A673 (cell line): ENCODE measurements at regions of chr1 and their contacts with region 1.

Region 1: GRCh38 chr1:197521118-197521739 is 253.2 kb downstream of the CRB1 start:
- DNase-seq: peak; percentile 68
- H3K4me3 ChIP-seq: no peak overlapping the region
- H3K27ac ChIP-seq: no peak overlapping the region
- H3K4me1 ChIP-seq: no peaks in the 10 kb centered on the region
- H3K27me3 ChIP-seq: no peaks in the 10 kb centered on the region
- CTCF ChIP-seq: peak; percentile 78

Region 2: GRCh38 chr1:196295766-196296165 is 1225.5 kb before region 1 on chr1:
- CTCF ChIA-PET with region 1: no interaction called
- POLR2A ChIA-PET with region 1: no interaction called
- intact Hi-C with region 1: no loop called
- DNase-seq: no peak
- H3K4me3 ChIP-seq: no peak overlapping the region
- H3K27ac ChIP-seq: no peak overlapping the region
- H3K4me1 ChIP-seq: no peaks in the 10 kb centered on the region
- H3K27me3 ChIP-seq: no peaks in the 10 kb centered on the region
- CTCF ChIP-seq: no peak

Region 3: GRCh38 chr1:197399755-197400527 is 121.3 kb before region 1 on chr1:
- CTCF ChIA-PET with region 1: interaction called, 3 read pairs
- POLR2A ChIA-PET with region 1: no interaction called
- intact Hi-C with region 1: loop called (anchors 5 kb)
- DNase-seq: peak; percentile 69
- H3K4me3 ChIP-seq: no peak overlapping the region
- H3K27ac ChIP-seq: no peak overlapping the region
- H3K4me1 ChIP-seq: no peaks in the 10 kb centered on the region
- H3K27me3 ChIP-seq: no peaks in the 10 kb centered on the region
- CTCF ChIP-seq: peak; percentile 75

Region 4: DNA sequence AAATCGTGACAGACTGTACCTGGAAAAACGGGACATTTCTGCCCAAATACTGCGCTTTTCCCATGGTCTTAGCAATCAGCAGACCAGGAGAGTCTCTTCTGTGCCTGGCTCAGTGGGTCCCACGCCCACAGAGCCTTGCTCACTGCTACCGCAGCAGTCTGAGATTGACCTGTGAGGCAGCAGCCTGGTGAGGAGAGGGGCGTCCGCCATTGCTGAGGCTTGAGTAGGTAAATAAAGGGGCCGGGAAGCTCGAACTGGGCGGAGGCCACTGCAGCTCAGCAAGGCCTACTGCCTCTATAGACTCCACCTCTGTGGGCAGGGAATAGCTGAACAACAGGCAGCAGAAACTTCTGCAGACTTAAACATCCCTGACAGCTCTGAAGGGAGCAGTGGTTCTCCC is 50.9 kb after region 1 on chr1:
- CTCF ChIA-PET with region 1: no interaction called
- POLR2A ChIA-PET with region 1: no interaction called
- intact Hi-C with region 1: loop called (anchors 10 kb)
- DNase-seq: no peak
- H3K4me3 ChIP-seq: no peak overlapping the region
- H3K27ac ChIP-seq: no peak overlapping the region
- H3K4me1 ChIP-seq: no peaks in the 10 kb centered on the region
- H3K27me3 ChIP-seq: no peaks in the 10 kb centered on the region
- CTCF ChIP-seq: no peak

Region 5: GRCh38 chr1:197868751-197869489 is 347.7 kb after region 1 on chr1:
- CTCF ChIA-PET with region 1: no interaction called
- POLR2A ChIA-PET with region 1: no interaction called
- intact Hi-C with region 1: loop called (anchors 5 kb)
- DNase-seq: peak; percentile 64
- H3K4me3 ChIP-seq: no peak overlapping the region
- H3K27ac ChIP-seq: no peak overlapping the region
- H3K4me1 ChIP-seq: no peaks in the 10 kb centered on the region
- H3K27me3 ChIP-seq: no peaks in the 10 kb centered on the region
- CTCF ChIP-seq: peak; percentile 65